PC-9 (cell line): ENCODE measurements at regions of chr3 and their contacts with region 1.

Region 1: DNA sequence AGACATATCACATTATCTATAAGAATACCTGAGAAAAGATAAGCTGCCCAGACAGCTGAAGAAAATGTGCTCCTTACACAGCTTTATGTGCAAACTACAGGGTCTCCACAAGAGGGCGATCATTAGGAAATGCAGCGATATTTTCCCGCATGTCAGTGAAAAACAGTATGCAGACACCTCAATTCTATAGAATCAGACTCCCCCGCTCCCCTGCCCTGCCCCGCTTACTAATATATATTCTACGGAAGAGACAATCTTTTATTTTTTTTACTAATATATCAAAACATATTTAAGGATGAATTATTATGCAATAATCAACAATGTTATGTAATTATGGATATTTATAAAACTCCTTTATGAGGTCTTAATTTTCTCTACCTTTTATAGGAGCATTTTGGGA is 681.3 kb downstream of the ROBO1 start:
- DNase-seq: peak; percentile 29 to 39
- H3K4me3 ChIP-seq: no peak overlapping the region
- H3K27ac ChIP-seq: no peak overlapping the region
- H3K4me1 ChIP-seq: no peaks in the 10 kb centered on the region
- H3K27me3 ChIP-seq: no peaks in the 10 kb centered on the region
- CTCF ChIP-seq: peak; percentile 86

Region 2: DNA sequence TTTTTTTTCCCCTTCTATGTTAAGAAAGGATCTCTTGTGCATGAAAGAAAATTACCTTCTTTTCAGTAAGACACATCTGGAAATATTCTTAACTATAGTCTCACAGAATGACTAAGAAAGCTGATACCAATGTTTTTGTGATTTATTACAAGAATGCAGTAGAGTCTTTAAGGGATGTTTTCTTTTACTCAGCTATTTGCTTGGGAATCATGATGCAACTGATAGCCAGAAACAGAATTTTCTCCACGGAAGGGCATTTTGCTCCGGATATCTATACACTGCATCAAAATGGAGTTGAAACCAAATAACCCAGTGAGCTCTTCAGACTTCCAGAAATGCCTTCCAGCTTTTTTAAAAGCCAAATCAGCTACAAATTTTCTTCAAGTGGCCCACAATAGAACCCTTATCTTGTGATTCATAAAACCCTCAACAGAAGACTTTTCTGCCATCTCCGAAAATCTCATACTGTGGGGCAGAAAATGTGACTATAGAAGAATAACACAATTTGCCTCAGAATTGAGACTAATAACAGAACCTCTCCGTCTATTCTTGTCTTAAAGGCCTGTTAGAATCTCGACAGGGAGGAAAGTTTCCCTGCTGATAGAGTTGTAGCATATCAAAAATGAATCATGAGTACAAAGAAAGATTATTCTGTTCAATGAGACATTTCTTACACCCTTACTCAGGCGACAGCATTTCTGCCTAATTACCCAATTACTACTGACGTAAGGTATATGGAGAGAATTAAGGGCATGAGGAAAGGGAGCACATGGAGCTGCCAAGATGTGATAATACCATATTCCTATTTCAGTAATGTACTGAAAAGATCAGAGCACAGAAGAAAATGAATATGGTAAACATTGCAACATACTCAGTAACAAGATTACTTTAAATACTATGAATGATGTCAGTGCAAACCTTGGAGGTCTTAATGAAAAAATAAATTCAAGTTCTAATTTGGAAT is 218.8 kb before region 1 on chr3:
- CTCF ChIA-PET with region 1: no interaction called
- POLR2A ChIA-PET with region 1: no interaction called
- intact Hi-C with region 1: no loop called
- DNase-seq: no peak
- H3K4me3 ChIP-seq: no peak overlapping the region
- H3K27ac ChIP-seq: no peak overlapping the region
- H3K4me1 ChIP-seq: no peaks in the 10 kb centered on the region
- H3K27me3 ChIP-seq: no peaks in the 10 kb centered on the region
- CTCF ChIP-seq: no peak

Region 3: GRCh38 chr3:79306934-79307570 is 220.5 kb after region 1 on chr3:
- CTCF ChIA-PET with region 1: interaction called, 12 read pairs
- POLR2A ChIA-PET with region 1: no interaction called
- intact Hi-C with region 1: no loop called
- DNase-seq: no peak
- H3K4me3 ChIP-seq: no peak overlapping the region
- H3K27ac ChIP-seq: no peak overlapping the region
- H3K4me1 ChIP-seq: no peaks in the 10 kb centered on the region
- H3K27me3 ChIP-seq: no peaks in the 10 kb centered on the region
- CTCF ChIP-seq: no peak

Region 4: GRCh38 chr3:79361748-79362378 is 275.3 kb after region 1 on chr3:
- CTCF ChIA-PET with region 1: interaction called, 26 read pairs
- POLR2A ChIA-PET with region 1: interaction called, 3 read pairs
- intact Hi-C with region 1: loop called (anchors 2 kb)
- DNase-seq: no peak
- H3K4me3 ChIP-seq: no peak overlapping the region
- H3K27ac ChIP-seq: no peak overlapping the region
- H3K4me1 ChIP-seq: no peaks in the 10 kb centered on the region
- H3K27me3 ChIP-seq: no peaks in the 10 kb centered on the region
- CTCF ChIP-seq: peak; percentile 74

Region 5: GRCh38 chr3:79497447-79498111 is 411.1 kb after region 1 on chr3:
- CTCF ChIA-PET with region 1: no interaction called
- POLR2A ChIA-PET with region 1: no interaction called
- intact Hi-C with region 1: loop called (anchors 5 kb)
- DNase-seq: no peak
- H3K4me3 ChIP-seq: no peak overlapping the region
- H3K27ac ChIP-seq: no peak overlapping the region
- H3K4me1 ChIP-seq: no peaks in the 10 kb centered on the region
- H3K27me3 ChIP-seq: no peaks in the 10 kb centered on the region
- CTCF ChIP-seq: peak; percentile 84